PC-9 (cell line): ENCODE measurements at regions of chr21 and their contacts with region 1.

Region 1: DNA sequence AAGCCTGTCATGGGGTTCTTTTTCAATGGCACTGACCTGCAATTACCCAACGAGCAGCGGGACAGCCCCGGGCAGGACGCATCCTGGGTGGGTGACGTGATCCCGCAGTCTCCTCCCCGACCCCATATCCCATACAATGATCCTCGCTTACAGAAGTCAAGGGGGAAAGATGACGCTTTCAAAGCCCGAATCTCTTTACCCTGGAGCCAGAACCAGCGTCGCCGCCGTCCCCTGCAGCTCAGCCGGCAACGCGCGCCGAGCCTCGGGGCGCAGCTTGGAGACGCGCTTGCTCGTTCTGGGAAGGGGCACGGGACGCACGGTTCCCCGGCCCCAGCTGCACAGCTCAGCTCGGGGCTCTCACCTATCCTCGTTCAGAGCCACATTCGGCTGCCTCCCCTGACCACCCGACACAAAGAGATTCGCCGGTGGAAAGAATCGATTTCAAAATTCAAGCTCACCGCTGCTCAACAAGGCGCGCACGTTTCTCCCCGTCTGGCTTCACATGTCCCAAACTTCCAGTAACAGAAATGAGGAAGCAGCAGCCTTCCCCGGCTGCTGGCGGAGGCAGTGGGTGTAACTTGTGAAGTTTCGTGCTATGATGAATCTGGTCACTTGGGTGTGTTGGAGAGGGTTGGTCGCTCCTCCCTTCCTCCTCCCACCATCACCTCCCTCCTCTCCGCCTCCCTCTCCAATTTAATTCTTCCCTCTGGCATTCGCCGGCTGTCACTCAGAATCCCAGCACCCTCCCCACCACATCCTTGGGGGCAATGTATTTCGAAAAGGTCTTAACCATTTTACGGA is at the start of gene TIAM1:
- DNase-seq: peak; percentile 65 to 82
- H3K4me3 ChIP-seq: peak within 1 kb of the TSS; percentile 81
- H3K27ac ChIP-seq: peak within 1 kb of the TSS; percentile 89
- H3K4me1 ChIP-seq: peaks cover 29% of the 10 kb centered on the region
- H3K27me3 ChIP-seq: no peaks in the 10 kb centered on the region
- CTCF ChIP-seq: no peak
- total RNA-seq, gene TIAM1: 19.7 and 22.5 TPM in 2 replicates

Region 2: DNA sequence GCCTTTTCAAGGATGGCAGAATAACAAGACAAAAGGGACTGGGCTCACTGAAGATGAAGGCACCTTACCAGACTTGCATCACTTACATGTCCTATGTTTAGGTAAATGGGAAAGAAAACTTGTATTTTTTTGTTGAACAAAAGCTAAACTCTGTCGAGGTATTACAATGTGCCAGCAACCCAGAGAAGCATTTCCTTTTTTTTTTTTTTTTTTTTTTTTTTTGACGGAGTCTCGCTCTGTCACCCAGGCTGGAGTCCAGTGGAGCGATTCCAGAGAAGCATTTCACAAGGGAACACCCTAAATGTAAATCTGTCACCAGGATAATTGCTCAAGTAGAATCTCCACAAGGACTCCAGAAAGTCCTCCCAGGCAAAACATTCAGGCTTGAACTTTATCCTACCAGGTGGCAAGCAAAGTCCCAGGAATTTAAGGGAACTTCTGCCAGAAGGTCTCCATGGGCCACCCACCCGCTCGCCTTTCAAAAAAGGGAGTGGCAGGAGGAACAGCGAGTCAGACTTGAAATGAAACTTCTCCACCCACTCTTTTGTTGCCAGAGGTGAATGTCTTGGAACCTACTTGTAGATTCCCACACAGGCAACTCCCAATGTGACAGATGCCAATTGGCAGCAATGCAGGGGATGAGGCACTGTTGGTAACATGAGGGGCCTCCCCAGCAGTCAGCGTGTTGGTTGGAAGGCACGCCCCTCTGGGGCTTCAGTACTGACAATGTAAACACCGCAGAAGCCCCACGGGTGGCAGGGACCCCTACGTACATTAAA is 124.9 kb before region 1 on chr21:
- CTCF ChIA-PET with region 1: no interaction called
- POLR2A ChIA-PET with region 1: no interaction called
- intact Hi-C with region 1: loop called (anchors 2 kb)
- DNase-seq: peak; percentile 69 to 89
- H3K4me3 ChIP-seq: peak overlapping the region; percentile 6; the same call in 1 of the 2 replicates
- H3K27ac ChIP-seq: peak overlapping the region; percentile 82
- H3K4me1 ChIP-seq: peaks cover 24% of the 10 kb centered on the region
- H3K27me3 ChIP-seq: no peaks in the 10 kb centered on the region
- CTCF ChIP-seq: no peak

Region 3: DNA sequence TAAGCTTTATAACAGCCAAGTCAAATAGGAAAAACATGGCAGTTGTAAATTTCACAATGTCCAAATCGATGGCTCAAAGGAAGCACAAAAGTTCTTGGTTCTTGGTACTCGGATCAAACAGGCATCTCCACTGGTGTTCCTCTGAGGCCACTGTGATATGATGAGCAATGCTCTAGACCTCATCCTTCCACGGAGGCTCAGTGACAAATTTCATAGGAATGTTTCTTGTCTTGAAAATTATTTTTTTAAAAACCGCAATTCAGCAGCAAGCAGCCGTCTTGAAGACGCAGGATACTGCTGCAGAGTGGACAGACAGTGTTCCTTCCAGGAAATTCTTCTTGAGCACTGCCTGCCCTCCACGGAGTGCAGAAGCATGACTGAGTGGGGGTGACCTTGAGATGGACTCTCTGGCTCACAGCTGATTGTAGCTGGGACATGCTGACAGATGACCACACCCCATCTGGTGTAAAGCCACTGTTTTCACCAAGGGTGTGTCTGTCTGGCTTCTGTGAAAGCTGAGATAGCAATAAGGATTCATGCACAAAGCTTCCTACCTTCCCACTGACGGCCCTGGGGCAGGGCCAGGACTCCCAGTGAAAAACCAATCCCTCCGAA is 61.7 kb before region 1 on chr21:
- CTCF ChIA-PET with region 1: no interaction called
- POLR2A ChIA-PET with region 1: no interaction called
- intact Hi-C with region 1: loop called (anchors 5 kb)
- DNase-seq: peak in 1 of 2 experiments; percentile 51
- H3K4me3 ChIP-seq: no peak overlapping the region
- H3K27ac ChIP-seq: no peak overlapping the region
- H3K4me1 ChIP-seq: no peaks in the 10 kb centered on the region
- H3K27me3 ChIP-seq: no peaks in the 10 kb centered on the region
- CTCF ChIP-seq: no peak

Region 4: GRCh38 chr21:31310750-31311149 is 33.1 kb before region 1 on chr21:
- CTCF ChIA-PET with region 1: no interaction called
- POLR2A ChIA-PET with region 1: interaction called, 8 read pairs
- intact Hi-C with region 1: loop called (anchors 1 kb)
- DNase-seq: peak; percentile 10 to 50
- H3K4me3 ChIP-seq: no peak overlapping the region
- H3K27ac ChIP-seq: no peak overlapping the region
- H3K4me1 ChIP-seq: no peaks in the 10 kb centered on the region
- H3K27me3 ChIP-seq: no peaks in the 10 kb centered on the region
- CTCF ChIP-seq: no peak

Region 5: GRCh38 chr21:31457675-31458074 is 113.8 kb after region 1 on chr21:
- CTCF ChIA-PET with region 1: no interaction called
- POLR2A ChIA-PET with region 1: no interaction called
- intact Hi-C with region 1: loop called (anchors 10 kb)
- DNase-seq: no peak
- H3K4me3 ChIP-seq: no peak overlapping the region
- H3K27ac ChIP-seq: no peak overlapping the region
- H3K4me1 ChIP-seq: no peaks in the 10 kb centered on the region
- H3K27me3 ChIP-seq: no peaks in the 10 kb centered on the region
- CTCF ChIP-seq: peak; percentile 14; the same call in 1 of the 2 replicates

Region 6: GRCh38 chr21:31558962-31559367 is 215.1 kb after region 1 on chr21:
- CTCF ChIA-PET with region 1: no interaction called
- POLR2A ChIA-PET with region 1: no interaction called
- intact Hi-C with region 1: loop called (anchors 5 kb)
- DNase-seq: peak; percentile 85 to 93
- H3K4me3 ChIP-seq: peak overlapping the region; percentile 80; the same call in 1 of the 2 replicates
- H3K27ac ChIP-seq: peak overlapping the region; percentile 91; the same call in 1 of the 2 replicates
- H3K4me1 ChIP-seq: peaks cover 9% of the 10 kb centered on the region
- H3K27me3 ChIP-seq: no peaks in the 10 kb centered on the region
- CTCF ChIP-seq: no peak; the same call in 1 of the 2 replicates

Region 7: GRCh38 chr21:31580866-31581276 is 237.0 kb after region 1 on chr21:
- CTCF ChIA-PET with region 1: interaction called, 4 read pairs
- POLR2A ChIA-PET with region 1: no interaction called
- intact Hi-C with region 1: loop called (anchors 1 kb)
- DNase-seq: peak; percentile 44 to 56
- H3K4me3 ChIP-seq: no peak overlapping the region
- H3K27ac ChIP-seq: no peak overlapping the region
- H3K4me1 ChIP-seq: no peaks in the 10 kb centered on the region
- H3K27me3 ChIP-seq: no peaks in the 10 kb centered on the region
- CTCF ChIP-seq: peak; percentile 85